H1 (cell line): ENCODE measurements at regions of chr20 and their contacts with region 1.

Region 1: DNA sequence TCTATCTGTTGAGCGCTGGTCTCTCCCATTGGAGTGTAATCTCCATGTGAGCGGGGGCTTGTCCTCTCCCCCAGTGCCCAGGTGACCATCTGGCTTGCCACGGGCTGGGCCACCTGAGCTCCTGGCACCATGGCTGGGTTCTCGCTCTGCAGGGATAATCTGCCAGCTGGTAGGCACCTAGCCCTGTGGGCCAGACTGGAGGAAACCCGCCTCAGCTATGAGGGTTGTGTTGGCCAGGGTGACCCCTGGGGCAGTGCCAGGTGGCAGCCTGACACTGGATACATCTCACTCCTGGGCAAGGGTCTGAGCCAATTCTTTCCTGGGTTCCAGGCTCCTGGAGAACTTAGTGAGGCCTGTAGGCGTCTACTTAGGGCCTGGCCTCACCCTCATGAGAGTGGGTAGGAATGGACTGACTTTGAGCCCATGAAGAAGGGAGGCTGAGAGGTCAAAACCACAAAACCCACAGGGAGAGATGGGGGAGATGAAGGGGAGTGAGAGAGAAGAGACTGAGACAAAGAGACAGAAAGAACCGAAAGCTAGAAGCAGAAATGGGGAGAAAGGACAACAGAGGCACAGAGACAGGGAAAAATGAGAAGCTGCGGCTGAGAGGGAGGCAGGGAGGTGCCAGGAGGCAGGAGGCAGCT is 5.8 kb upstream of the SLC52A3 start:
- DNase-seq: no peak
- H3K4me3 ChIP-seq: no peak overlapping the region
- H3K27ac ChIP-seq: no peak overlapping the region
- H3K4me1 ChIP-seq: peaks cover 3 to 13% (median 11%) of the 10 kb centered on the region in 4 experiments; a peak in 5 of 7 replicates
- H3K27me3 ChIP-seq: no peaks in the 10 kb centered on the region
- CTCF ChIP-seq: no peak
- EP300 ChIP-seq: no peak
- POLR2A ChIP-seq: no peak
- RAD21 ChIP-seq: no peak

Region 2: DNA sequence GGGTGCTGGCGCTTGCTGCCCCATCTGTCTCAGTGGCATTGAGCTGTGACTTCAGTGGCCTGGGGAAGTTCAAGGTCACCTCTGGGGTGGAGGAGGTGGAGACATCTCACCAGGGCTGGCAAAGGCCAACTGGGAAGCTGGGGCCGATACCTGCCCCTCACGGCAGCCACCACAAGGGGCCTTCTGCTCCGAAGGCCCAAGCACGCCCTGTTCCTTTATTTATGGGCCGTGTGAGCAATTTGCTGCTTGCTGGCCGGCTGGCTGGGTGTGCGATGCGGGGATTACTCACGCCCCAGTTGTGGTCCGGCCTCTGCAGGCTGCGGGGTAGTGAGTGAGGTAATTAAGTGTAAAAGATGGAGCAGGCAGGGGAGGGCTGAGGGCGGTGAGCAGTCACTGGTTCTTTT is 85.3 kb before region 1 on chr20:
- CTCF ChIA-PET with region 1: no interaction called
- POLR2A ChIA-PET with region 1: no interaction called
- DNase-seq: no peak
- H3K4me3 ChIP-seq: no peak overlapping the region
- H3K27ac ChIP-seq: no peak overlapping the region
- H3K4me1 ChIP-seq: peaks cover 0 to 12% (median 7%) of the 10 kb centered on the region in 4 experiments; a peak in 4 of 7 replicates
- H3K27me3 ChIP-seq: no peaks in the 10 kb centered on the region
- CTCF ChIP-seq: peak; percentile 14 to 46 (median 44); a peak in 3 of 4 replicates
- EP300 ChIP-seq: no peak
- POLR2A ChIP-seq: no peak
- RAD21 ChIP-seq: peak; percentile 17 to 45; a peak in 2 of 4 replicates

Region 3: GRCh38 chr20:760751-761417 is 13.3 kb before region 1 on chr20:
- CTCF ChIA-PET with region 1: interaction called, 13 read pairs
- POLR2A ChIA-PET with region 1: interaction called, 3 read pairs
- DNase-seq: peak; percentile 59 to 94
- H3K4me3 ChIP-seq: peak overlapping the region in 2 of 4 experiments; percentile 26 to 42; a peak in 5 of 8 replicates
- H3K27ac ChIP-seq: no peak overlapping the region
- H3K4me1 ChIP-seq: peaks cover 0 to 3% (median under 1%) of the 10 kb centered on the region in 4 experiments; a peak in 2 of 7 replicates
- H3K27me3 ChIP-seq: peaks cover 2 to 9% (median 8%) of the 10 kb centered on the region in 4 experiments; a peak in 6 of 7 replicates
- CTCF ChIP-seq: peak; percentile 77 to 100 (median 98)
- EP300 ChIP-seq: no peak
- POLR2A ChIP-seq: no peak
- RAD21 ChIP-seq: peak; percentile 32 to 51; a peak in 3 of 4 replicates

Region 4: DNA sequence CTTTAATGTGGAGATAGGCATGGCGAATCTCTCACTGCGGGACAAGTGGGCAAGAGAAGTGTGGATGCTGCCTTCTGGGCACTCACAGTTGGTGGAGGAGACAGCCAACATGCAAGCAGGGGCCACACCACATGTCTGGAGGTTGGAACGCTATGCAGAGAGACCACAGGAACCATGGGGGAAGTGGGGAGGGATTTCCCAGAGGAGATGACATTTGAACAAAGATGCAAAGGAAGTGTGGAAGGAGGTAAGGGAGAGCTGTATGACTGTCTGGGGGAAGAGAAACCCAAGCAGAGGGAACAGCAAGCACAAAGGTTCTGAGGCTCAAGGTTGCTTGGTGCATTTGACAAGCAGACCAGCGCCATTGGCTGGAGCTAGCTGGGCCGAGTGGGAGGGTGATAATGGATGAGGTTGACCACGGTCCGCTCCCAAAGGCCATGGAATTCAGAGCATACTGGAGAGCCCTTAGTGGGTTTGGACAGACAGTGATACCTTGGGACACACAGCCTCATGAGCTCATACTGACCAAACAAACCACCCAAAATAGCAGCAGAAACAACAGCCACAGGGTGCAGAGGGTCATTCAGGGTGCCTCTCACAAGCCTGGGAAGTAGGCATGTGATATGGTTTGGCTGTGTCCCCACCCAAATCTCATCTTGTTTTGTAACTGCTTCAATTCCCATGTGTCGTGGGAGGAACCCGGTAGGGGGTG is 51.7 kb after region 1 on chr20:
- CTCF ChIA-PET with region 1: no interaction called
- POLR2A ChIA-PET with region 1: no interaction called
- DNase-seq: no peak
- H3K4me3 ChIP-seq: no peak overlapping the region
- H3K27ac ChIP-seq: no peak overlapping the region
- H3K4me1 ChIP-seq: peaks cover 0 to 6% (median 0%) of the 10 kb centered on the region in 4 experiments; a peak in 1 of 7 replicates
- H3K27me3 ChIP-seq: no peaks in the 10 kb centered on the region
- CTCF ChIP-seq: no peak
- EP300 ChIP-seq: no peak
- POLR2A ChIP-seq: no peak
- RAD21 ChIP-seq: no peak

Region 5: GRCh38 chr20:840858-841567 is 66.9 kb after region 1 on chr20:
- CTCF ChIA-PET with region 1: no interaction called
- POLR2A ChIA-PET with region 1: no interaction called
- DNase-seq: peak in 1 of 2 experiments; percentile 72
- H3K4me3 ChIP-seq: peak overlapping the region; percentile 35 to 82 (median 64)
- H3K27ac ChIP-seq: no peak overlapping the region
- H3K4me1 ChIP-seq: peaks cover 3 to 27% (median 12%) of the 10 kb centered on the region in 4 experiments
- H3K27me3 ChIP-seq: peaks cover 2 to 39% (median 31%) of the 10 kb centered on the region in 4 experiments
- CTCF ChIP-seq: no peak
- EP300 ChIP-seq: no peak
- POLR2A ChIP-seq: no peak
- RAD21 ChIP-seq: no peak